K562 (cell line): ENCODE measurements at regions of chr2 and their contacts with region 1.

Region 1: DNA sequence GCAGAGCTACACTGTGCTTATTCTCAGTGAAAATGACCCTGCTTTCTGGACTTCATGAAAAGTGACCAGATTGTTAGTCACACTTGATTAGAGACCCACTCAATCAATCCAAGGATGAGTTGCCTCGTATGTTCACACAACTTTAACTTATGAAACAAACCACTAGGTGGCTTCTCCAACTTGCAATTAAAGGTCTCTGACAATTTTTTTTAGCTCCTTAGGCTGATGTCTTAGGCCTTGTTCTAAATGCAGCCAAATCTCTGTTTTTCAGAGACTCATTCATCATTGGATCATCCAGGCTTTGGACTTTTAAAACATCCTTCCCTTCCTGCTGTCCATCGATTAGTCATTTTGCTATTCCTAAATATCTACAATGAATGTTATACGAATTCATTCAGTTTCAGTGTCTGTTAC is 63.4 kb downstream of the MREG start:
- DNase-seq: peak in 3 of 4 experiments; percentile 20 to 33 (median 25)
- ATAC-seq: peak; percentile 80
- H3K4me3 ChIP-seq: no peak overlapping the region
- H3K27ac ChIP-seq: no peak overlapping the region
- H3K4me1 ChIP-seq: no peaks in the 10 kb centered on the region
- H3K27me3 ChIP-seq: no peaks in the 10 kb centered on the region
- CTCF ChIP-seq: peak; percentile 33 to 53 (median 47); a peak in 4 of 6 replicates
- EP300 ChIP-seq: no peak
- POLR2A ChIP-seq: no peak
- RAD21 ChIP-seq: peak; percentile 52 to 75; a peak in 3 of 4 replicates

Region 2: GRCh38 chr2:215880970-215881369 is 69.0 kb before region 1 on chr2:
- CTCF ChIA-PET with region 1: no interaction called
- POLR2A ChIA-PET with region 1: no interaction called
- in situ Hi-C with region 1: no loop called
- intact Hi-C with region 1: no loop called
- DNase-seq: peak in 2 of 4 experiments; percentile 20 to 45
- ATAC-seq: peak; percentile 83
- H3K4me3 ChIP-seq: no peak overlapping the region
- H3K27ac ChIP-seq: no peak overlapping the region
- H3K4me1 ChIP-seq: peaks cover 0 to 3% of the 10 kb centered on the region in 2 experiments; a peak in 2 of 5 replicates
- H3K27me3 ChIP-seq: no peaks in the 10 kb centered on the region
- CTCF ChIP-seq: no peak; a peak in 1 of 6 replicates
- EP300 ChIP-seq: no peak
- POLR2A ChIP-seq: no peak
- RAD21 ChIP-seq: no peak

Region 3: DNA sequence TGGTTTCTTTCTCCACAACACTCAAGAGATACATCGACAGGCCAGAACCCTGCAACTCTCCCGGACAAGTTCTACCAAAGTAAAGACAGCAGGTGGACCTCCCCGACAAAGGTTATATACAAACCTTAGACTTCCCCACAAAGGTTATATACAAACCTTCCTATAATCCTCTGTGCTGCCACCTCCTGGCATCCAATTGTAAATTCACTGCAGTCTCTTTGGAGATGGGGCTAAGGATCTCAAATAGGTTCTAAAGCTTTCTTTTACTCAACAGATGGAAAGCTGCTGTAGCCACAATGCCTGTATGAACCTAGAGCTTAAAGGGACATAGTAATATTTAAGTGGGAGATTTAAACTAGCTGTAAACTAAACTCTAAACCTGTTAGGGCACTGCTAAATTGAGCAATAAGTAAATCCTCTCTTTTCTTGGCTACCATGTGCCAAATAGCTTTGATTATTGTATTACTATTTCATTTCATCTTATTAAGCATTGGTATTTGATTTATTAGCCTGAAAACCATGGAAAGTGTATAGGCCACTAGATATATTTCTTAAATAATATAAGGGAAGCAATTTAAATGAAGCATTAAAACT is 73.2 kb after region 1 on chr2:
- CTCF ChIA-PET with region 1: interaction called, 4 read pairs
- POLR2A ChIA-PET with region 1: no interaction called
- in situ Hi-C with region 1: no loop called
- intact Hi-C with region 1: loop called (anchors 1 kb)
- DNase-seq: peak; percentile 48 to 61 (median 53)
- ATAC-seq: peak; percentile 95
- H3K4me3 ChIP-seq: no peak overlapping the region
- H3K27ac ChIP-seq: no peak overlapping the region
- H3K4me1 ChIP-seq: no peaks in the 10 kb centered on the region; a peak in 1 of 5 replicates
- H3K27me3 ChIP-seq: no peaks in the 10 kb centered on the region
- CTCF ChIP-seq: peak; percentile 56 to 71 (median 64)
- EP300 ChIP-seq: no peak
- POLR2A ChIP-seq: no peak
- RAD21 ChIP-seq: peak; percentile 43 to 67